ENCODE measurements at regions of chr5 and their contacts with region 1.

Region 1: DNA sequence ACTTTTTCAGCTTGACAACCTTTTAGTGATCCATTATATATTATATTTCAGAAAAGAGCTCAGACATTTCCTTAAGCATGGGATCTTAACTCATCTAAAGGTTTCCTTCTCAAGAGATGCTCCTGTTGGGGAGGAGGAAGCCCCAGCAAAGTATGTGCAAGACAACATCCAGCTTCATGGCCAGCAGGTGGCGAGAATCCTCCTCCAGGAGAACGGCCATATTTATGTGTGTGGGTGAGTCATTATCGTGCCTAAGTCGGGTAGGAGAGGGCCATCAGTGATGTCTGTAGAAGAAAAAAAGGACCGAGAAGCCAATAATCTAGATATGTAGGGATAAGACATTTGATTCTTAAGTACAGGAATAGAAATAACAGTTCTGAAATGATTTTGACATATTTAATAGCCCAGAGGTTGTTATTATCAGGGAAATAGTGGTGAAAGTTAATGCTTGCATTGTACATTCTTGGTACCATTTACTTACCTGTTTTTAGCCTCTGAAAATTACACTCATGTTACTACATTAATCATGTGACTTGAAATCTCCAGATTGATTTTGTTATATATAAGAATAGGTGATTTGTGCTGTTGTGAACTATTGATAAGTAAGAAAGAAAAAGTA is 28.2 kb downstream of the MTRR start:
- DNase-seq: peak; percentile 53
- ATAC-seq: peak; percentile 53
- H3K4me3 Mint-ChIP-seq: no peak overlapping the region
- H3K27ac Mint-ChIP-seq: no peak overlapping the region
- H3K4me1 Mint-ChIP-seq: peaks cover 13% of the 10 kb centered on the region
- H3K27me3 Mint-ChIP-seq: no peaks in the 10 kb centered on the region
- CTCF ChIP-seq: peak; percentile 23

Region 2: DNA sequence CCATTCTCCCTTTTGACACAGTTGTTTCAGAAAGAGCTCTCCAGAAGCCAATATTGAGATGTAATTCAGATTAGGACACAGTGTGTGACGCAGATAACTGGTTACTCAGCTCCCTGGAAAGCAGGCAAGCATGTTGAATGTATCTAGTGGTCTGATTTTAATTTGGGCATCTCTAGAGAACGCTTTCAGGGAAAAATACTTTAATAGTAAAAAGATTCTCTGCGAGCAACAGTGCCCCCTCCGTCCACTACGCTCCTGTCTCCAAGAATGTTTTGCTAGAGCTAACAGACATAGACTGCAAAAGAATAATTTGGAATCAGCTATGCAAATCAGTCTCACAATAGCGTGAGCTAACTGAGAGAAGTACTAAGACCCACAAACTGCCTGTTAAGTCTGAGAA is 69.5 kb before region 1 on chr5:
- CTCF ChIA-PET with region 1: no interaction called
- POLR2A ChIA-PET with region 1: no interaction called
- intact Hi-C with region 1: no loop called
- DNase-seq: no peak
- ATAC-seq: no peak
- H3K4me3 Mint-ChIP-seq: no peak overlapping the region
- H3K27ac Mint-ChIP-seq: no peak overlapping the region
- H3K4me1 Mint-ChIP-seq: no peaks in the 10 kb centered on the region
- H3K27me3 Mint-ChIP-seq: peaks cover 12% of the 10 kb centered on the region
- CTCF ChIP-seq: no peak

Region 3: GRCh38 chr5:7886849-7887475 is 10.2 kb before region 1 on chr5:
- CTCF ChIA-PET with region 1: interaction called, 12 read pairs
- POLR2A ChIA-PET with region 1: no interaction called
- intact Hi-C with region 1: no loop called
- DNase-seq: no peak
- ATAC-seq: no peak
- H3K4me3 Mint-ChIP-seq: no peak overlapping the region
- H3K27ac Mint-ChIP-seq: no peak overlapping the region
- H3K4me1 Mint-ChIP-seq: peaks cover 3% of the 10 kb centered on the region
- H3K27me3 Mint-ChIP-seq: no peaks in the 10 kb centered on the region
- CTCF ChIP-seq: peak; percentile 38

Region 4: GRCh38 chr5:8376478-8376877 is 479.4 kb after region 1 on chr5:
- CTCF ChIA-PET with region 1: no interaction called
- POLR2A ChIA-PET with region 1: no interaction called
- intact Hi-C with region 1: no loop called
- DNase-seq: peak; percentile 48
- ATAC-seq: no peak
- H3K4me3 Mint-ChIP-seq: no peak overlapping the region
- H3K27ac Mint-ChIP-seq: no peak overlapping the region
- H3K4me1 Mint-ChIP-seq: peaks cover 4% of the 10 kb centered on the region
- H3K27me3 Mint-ChIP-seq: no peaks in the 10 kb centered on the region
- CTCF ChIP-seq: no peak

Measured in activated CD8-positive, alpha-beta T cell treated with anti-CD3 and anti-CD28 coated beads for 36 hours (primary cell).